WTC11 (cell line): ENCODE measurements at regions of chr15 and their contacts with region 1.

Region 1: DNA sequence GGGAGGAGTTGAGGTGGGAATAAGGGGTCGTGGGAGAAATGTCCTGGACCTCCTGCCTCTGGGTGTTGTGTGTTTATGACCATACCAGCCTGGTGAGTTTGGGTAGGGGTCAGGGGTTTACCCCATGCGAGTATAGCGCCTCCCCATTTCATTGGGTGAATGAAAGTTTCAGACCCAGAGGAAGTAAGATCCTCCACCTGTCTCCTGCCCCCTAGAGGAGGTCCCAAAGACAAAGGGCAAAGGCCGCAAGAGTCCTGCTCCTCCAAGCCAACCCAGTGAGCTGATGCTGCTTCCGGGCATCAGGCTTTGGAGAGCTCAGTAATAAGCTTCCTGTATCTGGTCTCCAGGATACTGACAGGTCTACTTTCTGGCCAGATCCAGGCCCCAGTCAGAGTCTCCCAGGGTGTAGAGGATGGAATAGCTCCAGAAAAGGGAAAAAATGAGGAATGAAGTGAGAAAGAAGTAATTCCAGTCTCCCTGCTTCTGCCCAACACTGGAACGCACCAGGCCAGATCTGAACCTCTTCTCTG is 6.4 kb upstream of the TBC1D21 start:
- DNase-seq: peak; percentile 67
- ATAC-seq: peak; percentile 93
- H3K4me3 Mint-ChIP-seq: no peak overlapping the region
- H3K27ac Mint-ChIP-seq: no peak overlapping the region
- H3K4me1 Mint-ChIP-seq: peaks cover 37% of the 10 kb centered on the region
- H3K27me3 Mint-ChIP-seq: no peaks in the 10 kb centered on the region
- CTCF ChIP-seq: no peak; the same call in 1 of the 2 replicates

Region 2: GRCh38 chr15:73704869-73705645 is 161.9 kb before region 1 on chr15:
- CTCF ChIA-PET with region 1: interaction called, 18 read pairs
- POLR2A ChIA-PET with region 1: no interaction called
- DNase-seq: peak; percentile 84
- ATAC-seq: peak; percentile 71
- H3K4me3 Mint-ChIP-seq: no peak overlapping the region
- H3K27ac Mint-ChIP-seq: no peak overlapping the region
- H3K4me1 Mint-ChIP-seq: peaks cover 9% of the 10 kb centered on the region
- H3K27me3 Mint-ChIP-seq: no peaks in the 10 kb centered on the region
- CTCF ChIP-seq: peak; percentile 83

Region 3: DNA sequence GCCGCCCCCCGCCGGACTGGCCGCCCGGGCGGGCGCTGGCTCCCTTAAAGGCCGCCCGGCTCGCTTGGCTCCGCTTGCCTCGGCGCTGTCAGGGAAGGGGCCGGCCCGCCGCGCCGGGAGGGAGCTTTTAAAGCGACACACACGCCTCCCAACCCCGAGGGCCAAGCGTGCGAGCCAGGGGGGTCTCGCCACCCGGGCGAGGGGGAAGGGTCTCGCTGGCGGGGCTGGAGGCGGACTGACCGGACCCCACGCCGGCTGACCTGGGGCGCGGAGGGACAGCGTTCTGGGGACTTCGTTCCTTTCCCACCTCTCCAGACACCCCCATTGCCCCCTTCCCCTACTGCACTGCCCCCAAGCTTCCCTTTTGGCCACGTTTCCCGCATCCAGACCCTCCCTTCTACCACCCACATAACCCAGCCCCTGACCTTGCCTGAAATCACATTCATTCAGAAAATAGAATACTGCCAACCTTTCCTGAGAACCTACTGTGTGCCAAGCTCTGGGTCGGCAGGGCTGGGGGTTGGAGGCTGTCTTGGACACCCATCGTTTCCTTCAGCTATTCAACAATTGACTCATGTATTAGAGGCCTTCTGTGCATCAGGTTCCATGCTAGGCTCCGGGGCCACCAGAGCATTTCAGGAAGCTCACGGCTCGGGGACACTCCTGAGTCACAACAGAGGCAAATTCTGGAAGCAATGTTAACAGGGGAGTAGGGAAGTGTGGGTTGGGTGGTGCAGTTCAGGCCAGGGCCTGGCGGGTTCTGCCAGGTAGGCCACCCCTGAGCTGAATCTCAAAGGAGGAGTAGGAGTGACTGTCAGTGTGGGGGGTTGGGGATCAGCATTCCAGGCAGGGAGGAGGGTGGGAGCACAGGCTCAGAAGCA is 113.5 kb before region 1 on chr15 and contains the start of gene INSYN1:
- CTCF ChIA-PET with region 1: interaction called, 12 read pairs
- POLR2A ChIA-PET with region 1: no interaction called
- DNase-seq: peak; percentile 42
- ATAC-seq: peak; percentile 68
- H3K4me3 Mint-ChIP-seq: peak within 1 kb of the TSS; percentile 69
- H3K27ac Mint-ChIP-seq: no peak within 1 kb of the TSS
- H3K4me1 Mint-ChIP-seq: peaks cover 27% of the 10 kb centered on the region
- H3K27me3 Mint-ChIP-seq: peaks cover 26% of the 10 kb centered on the region
- CTCF ChIP-seq: no peak
- total RNA-seq, gene INSYN1: 9.0 to 11.9 TPM (median 9.8 TPM) in 3 replicates

Region 4: GRCh38 chr15:73794443-73795133 is 72.4 kb before region 1 on chr15:
- CTCF ChIA-PET with region 1: interaction called, 34 read pairs
- POLR2A ChIA-PET with region 1: no interaction called
- DNase-seq: no peak
- ATAC-seq: peak; percentile 38; the same call in 1 of the 2 replicates
- H3K4me3 Mint-ChIP-seq: no peak overlapping the region
- H3K27ac Mint-ChIP-seq: no peak overlapping the region
- H3K4me1 Mint-ChIP-seq: peaks cover 26% of the 10 kb centered on the region
- H3K27me3 Mint-ChIP-seq: no peaks in the 10 kb centered on the region; the same call in 1 of the 2 replicates
- CTCF ChIP-seq: no peak

Region 5: DNA sequence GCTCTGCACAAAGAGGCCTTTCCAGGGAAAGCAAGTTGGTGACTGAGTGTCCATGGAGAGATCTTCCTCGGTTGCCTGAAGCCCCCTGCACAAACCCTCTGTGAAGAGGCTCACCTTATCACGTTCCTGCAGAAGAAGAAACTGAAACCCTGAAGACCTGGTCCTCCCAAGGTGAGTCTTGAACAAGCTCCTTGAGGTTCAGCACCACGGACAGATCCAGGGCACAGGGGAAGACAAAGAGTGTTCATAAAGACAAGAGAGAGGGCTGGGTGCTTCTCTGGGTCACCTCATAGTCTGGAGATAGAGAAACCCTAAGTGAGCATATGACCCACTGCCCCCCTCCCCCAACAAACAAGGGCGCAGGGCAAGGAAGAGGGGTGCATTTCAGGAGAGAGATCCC is 15.3 kb before region 1 on chr15:
- CTCF ChIA-PET with region 1: interaction called, 33 read pairs
- POLR2A ChIA-PET with region 1: no interaction called
- DNase-seq: peak; percentile 84
- ATAC-seq: peak; percentile 85
- H3K4me3 Mint-ChIP-seq: no peak overlapping the region
- H3K27ac Mint-ChIP-seq: no peak overlapping the region
- H3K4me1 Mint-ChIP-seq: peaks cover 7% of the 10 kb centered on the region
- H3K27me3 Mint-ChIP-seq: no peaks in the 10 kb centered on the region; the same call in 1 of the 2 replicates
- CTCF ChIP-seq: no peak

Region 6: GRCh38 chr15:73922186-73923151 is 55.5 kb after region 1 on chr15:
- CTCF ChIA-PET with region 1: interaction called, 21 read pairs
- POLR2A ChIA-PET with region 1: no interaction called
- DNase-seq: peak; percentile 65
- ATAC-seq: peak; percentile 51
- H3K4me3 Mint-ChIP-seq: peak overlapping the region; percentile 47
- H3K27ac Mint-ChIP-seq: no peak overlapping the region; the same call in 1 of the 2 replicates
- H3K4me1 Mint-ChIP-seq: peaks cover 53% of the 10 kb centered on the region
- H3K27me3 Mint-ChIP-seq: peaks cover 9% of the 10 kb centered on the region
- CTCF ChIP-seq: no peak

Region 7: DNA sequence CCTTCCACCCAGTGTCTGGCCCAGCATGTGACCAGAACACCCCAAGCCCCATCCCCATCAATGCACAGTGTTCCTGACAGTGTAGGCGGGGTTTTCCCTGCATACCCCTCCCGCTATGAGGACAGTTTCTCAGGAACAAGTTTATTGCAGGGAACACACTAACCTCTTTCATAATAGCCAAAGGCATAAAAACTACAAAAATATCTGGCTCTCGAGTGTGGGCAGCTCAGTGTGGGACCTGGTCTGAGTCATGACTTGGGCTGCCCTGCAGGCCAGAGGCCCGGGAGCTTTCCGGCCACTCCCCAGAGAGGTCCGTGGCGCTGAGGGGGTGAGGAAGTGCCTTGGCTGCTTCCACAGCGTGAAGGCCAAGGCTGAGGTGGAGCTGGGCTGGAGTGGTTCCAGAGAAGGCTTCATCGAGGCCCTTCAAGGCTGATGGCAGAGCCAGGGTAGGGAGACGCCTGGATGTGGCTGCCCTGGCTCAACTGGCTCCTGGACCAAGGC is 312.4 kb after region 1 on chr15:
- CTCF ChIA-PET with region 1: no interaction called
- POLR2A ChIA-PET with region 1: no interaction called
- DNase-seq: no peak
- ATAC-seq: no peak
- H3K4me3 Mint-ChIP-seq: no peak overlapping the region
- H3K27ac Mint-ChIP-seq: no peak overlapping the region
- H3K4me1 Mint-ChIP-seq: peaks cover 36% of the 10 kb centered on the region
- H3K27me3 Mint-ChIP-seq: no peaks in the 10 kb centered on the region; the same call in 1 of the 2 replicates
- CTCF ChIP-seq: no peak